AG04449 (cell line): ENCODE measurements at regions of chr6 and their contacts with region 1.

Region 1: GRCh38 chr6:146913842-146914488 is 290.3 kb upstream of the STXBP5 start:
- DNase-seq: peak; percentile 97
- H3K4me3 ChIP-seq: peak overlapping the region; percentile 25
- CTCF ChIP-seq: peak; percentile 1

Region 2: DNA sequence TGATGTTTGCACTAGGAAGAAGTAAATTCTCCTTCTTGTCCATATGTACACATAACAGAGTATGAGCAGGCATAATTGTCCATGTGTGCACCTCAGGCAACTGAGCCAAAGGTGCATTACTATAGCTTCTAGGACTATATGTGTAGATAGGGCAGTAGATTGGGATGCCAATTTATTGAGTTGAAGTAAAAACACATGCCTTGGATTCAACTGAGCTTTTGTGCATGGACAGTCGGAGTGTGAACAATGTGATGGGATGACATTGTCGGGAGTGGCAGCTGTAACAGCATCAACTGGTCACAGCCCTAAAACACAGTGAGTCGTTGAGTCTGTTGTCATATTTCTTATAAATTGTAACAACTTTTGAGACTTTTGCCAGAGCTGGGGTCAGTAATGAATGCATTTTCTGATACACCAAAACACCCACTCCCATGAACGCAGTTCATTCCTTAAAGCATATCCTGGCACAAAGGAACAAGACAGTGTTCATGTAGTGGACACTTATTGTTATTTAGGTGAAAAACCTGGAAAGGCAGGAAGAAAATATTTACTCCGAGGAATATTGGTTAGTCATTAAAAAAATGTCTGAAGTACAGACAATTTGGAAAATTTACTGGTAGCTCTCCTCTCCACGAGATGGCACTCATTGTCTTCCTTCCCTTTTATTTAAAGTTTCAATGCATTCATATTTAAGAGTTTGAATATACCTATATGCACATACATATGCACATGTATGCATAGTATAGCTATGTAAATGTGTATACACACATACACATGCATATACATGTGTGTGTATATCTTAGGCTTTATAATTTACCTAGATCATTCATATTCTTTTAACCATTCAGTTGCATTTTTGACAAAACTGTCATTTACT is 11.8 kb before region 1 on chr6:
- CTCF ChIA-PET with region 1: interaction called, 26 read pairs
- POLR2A ChIA-PET with region 1: no interaction called
- DNase-seq: no peak
- H3K4me3 ChIP-seq: no peak overlapping the region
- CTCF ChIP-seq: peak; percentile 16

Region 3: GRCh38 chr6:146931208-146931607 is 17.2 kb after region 1 on chr6:
- CTCF ChIA-PET with region 1: no interaction called
- POLR2A ChIA-PET with region 1: no interaction called
- DNase-seq: no peak
- H3K4me3 ChIP-seq: no peak overlapping the region
- CTCF ChIP-seq: no peak